HepG2 (cell line): ENCODE measurements at regions of chr20 and their contacts with region 1.

Region 1: DNA sequence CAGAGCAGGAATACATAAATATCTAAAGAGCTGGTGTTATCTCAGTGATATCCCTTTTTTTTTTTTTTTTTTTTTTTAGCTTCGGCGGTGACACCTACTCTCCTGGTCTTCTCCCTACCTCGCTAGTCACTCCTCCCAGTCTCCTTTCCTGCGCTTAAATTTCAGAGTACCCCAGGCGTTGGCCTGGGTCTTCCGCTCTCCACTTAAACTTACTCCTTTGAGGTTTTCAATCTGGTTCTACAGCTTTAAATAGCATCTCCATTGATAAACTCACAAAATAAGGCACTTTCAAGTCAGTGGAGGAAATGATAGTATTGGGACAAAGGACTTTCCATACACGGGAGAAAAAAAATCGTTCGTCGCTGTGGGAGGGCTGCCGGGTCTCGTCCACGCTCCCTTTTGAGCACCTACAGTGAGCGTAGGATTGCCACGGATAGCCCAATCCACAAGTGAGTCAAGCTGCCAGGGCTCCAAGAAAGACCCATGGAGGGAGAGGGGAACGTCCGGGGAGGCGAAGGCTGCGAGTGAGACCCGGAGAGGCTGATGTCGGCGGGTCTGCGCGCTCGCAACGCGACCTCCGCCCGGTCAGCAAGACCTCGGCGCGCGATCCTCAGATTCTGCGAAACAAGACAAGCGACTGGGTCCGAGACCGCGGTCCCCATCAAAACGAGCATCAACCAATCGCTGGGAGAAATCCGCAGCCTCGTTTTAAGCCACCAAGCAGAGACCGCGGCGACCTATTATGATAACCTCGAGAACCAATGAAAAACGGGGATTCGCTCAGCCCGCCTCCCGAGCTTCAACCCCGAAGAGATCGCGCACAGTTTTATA is 672 bp upstream of the SRSF6 start:
- DNase-seq: peak; percentile 97
- ATAC-seq: peak; percentile 90
- H3K4me3 ChIP-seq: peak overlapping the region; percentile 86 to 96 (median 90)
- H3K27ac ChIP-seq: peak overlapping the region; percentile 97
- H3K4me1 ChIP-seq: peaks cover 59% of the 10 kb centered on the region
- H3K27me3 ChIP-seq: peaks cover 0 to 2% of the 10 kb centered on the region in 2 experiments; a peak in 1 of 5 replicates
- CTCF ChIP-seq: 0 out of 2 replicates have a peak, but pooled peaks have one; percentile 14
- EP300 ChIP-seq: no peak
- POLR2A ChIP-seq: peak in 1 of 2 experiments; percentile 72; a peak in 2 of 4 replicates
- RAD21 ChIP-seq: no peak

Region 2: GRCh38 chr20:43507150-43508080 is 50.4 kb after region 1 on chr20 and contains the start of gene L3MBTL1:
- CTCF ChIA-PET with region 1: no interaction called
- POLR2A ChIA-PET with region 1: interaction called, 33 read pairs
- in situ Hi-C with region 1: no loop called
- intact Hi-C with region 1: loop called (anchors 5 kb)
- DNase-seq: peak; percentile 70
- ATAC-seq: peak; percentile 97
- H3K4me3 ChIP-seq: peak within 1 kb of the TSS; percentile 61 to 83 (median 73)
- H3K27ac ChIP-seq: no peak within 1 kb of the TSS
- H3K4me1 ChIP-seq: peaks cover 28% of the 10 kb centered on the region
- H3K27me3 ChIP-seq: peaks cover 2 to 24% of the 10 kb centered on the region in 2 experiments; a peak in 3 of 5 replicates
- CTCF ChIP-seq: peak; percentile 48; the same call in 1 of the 2 replicates
- EP300 ChIP-seq: no peak
- POLR2A ChIP-seq: peak in 1 of 2 experiments; percentile 86; a peak in 3 of 4 replicates
- RAD21 ChIP-seq: peak; percentile 69
- total RNA-seq, gene L3MBTL1: 2.4 and 9.0 TPM in 2 replicates

Region 3: DNA sequence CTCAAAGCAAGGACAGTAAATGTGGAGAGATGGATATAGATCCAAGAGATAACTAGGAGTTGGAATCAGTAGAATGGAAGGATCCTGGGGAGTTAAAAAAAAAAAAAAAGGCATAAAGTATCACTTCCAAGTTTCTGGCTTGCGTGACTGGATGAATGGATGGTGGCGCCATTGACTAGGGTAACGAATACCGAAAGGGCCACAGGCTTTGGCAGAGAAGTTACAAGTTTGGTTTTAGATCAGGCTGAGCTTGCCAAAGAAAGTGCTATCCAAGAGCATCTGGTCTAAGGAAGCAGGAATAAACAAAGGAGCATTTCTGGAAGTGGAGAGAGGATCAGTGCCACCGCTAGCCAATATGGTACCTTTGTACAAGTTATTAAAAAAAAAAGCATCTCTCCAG is 68.0 kb after region 1 on chr20:
- CTCF ChIA-PET with region 1: no interaction called
- POLR2A ChIA-PET with region 1: interaction called, 34 read pairs
- in situ Hi-C with region 1: no loop called
- intact Hi-C with region 1: no loop called
- DNase-seq: no peak
- ATAC-seq: no peak
- H3K4me3 ChIP-seq: no peak overlapping the region
- H3K27ac ChIP-seq: no peak overlapping the region
- H3K4me1 ChIP-seq: peaks cover 12% of the 10 kb centered on the region
- H3K27me3 ChIP-seq: no peaks in the 10 kb centered on the region
- CTCF ChIP-seq: no peak
- EP300 ChIP-seq: no peak
- POLR2A ChIP-seq: no peak
- RAD21 ChIP-seq: no peak

Region 4: DNA sequence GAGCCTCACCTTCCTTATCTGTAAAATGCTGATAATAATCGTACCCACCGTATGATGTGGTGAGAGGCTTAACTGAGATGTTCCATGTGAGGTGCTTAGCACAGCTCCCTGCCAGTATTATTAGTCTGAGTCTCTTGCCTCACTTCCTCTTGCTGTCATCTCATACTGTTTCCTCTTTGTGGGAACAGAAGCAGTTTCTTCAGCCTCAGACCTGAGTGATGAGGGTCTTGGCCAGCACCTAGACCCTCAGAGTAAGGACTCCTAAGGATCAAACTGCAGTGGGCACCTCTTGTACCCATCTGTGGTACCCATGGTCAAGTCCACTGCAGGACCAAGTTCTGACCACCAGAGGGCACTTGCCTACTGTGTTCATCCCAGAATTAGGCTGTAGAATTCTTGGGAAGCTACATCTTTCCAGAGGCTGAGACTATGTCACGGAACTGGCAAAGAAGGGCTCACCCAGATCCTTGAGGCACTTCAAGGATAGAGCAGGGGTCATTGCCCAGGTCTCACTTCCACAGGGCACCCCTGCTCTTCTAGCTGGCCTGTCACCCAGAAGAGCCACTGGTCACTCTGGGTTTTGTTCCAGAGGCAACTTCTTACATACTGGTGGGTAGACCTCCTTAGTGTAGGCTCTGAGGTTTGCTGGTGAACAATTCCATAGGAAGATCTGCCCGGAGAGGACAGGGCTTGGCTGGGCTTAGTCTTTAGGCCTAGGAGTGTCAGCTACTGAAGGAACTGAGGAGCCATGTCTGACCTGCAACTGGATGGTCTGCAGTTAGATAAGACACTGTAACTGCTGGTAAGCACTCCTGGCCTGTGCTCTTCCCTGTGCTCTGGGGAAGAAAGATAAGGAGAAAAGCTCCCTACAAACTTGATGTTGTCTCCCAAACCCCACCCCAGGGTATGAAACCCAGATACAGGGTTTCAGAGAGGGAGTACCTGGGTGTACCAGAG is 81.2 kb after region 1 on chr20:
- CTCF ChIA-PET with region 1: no interaction called
- POLR2A ChIA-PET with region 1: interaction called, 18 read pairs
- in situ Hi-C with region 1: no loop called
- intact Hi-C with region 1: no loop called
- DNase-seq: peak; percentile 74
- ATAC-seq: peak; percentile 67
- H3K4me3 ChIP-seq: no peak overlapping the region
- H3K27ac ChIP-seq: no peak overlapping the region
- H3K4me1 ChIP-seq: peaks cover 45% of the 10 kb centered on the region
- H3K27me3 ChIP-seq: no peaks in the 10 kb centered on the region; a peak in 1 of 5 replicates
- CTCF ChIP-seq: peak; percentile 99
- EP300 ChIP-seq: no peak
- POLR2A ChIP-seq: no peak
- RAD21 ChIP-seq: peak; percentile 97

Region 5: DNA sequence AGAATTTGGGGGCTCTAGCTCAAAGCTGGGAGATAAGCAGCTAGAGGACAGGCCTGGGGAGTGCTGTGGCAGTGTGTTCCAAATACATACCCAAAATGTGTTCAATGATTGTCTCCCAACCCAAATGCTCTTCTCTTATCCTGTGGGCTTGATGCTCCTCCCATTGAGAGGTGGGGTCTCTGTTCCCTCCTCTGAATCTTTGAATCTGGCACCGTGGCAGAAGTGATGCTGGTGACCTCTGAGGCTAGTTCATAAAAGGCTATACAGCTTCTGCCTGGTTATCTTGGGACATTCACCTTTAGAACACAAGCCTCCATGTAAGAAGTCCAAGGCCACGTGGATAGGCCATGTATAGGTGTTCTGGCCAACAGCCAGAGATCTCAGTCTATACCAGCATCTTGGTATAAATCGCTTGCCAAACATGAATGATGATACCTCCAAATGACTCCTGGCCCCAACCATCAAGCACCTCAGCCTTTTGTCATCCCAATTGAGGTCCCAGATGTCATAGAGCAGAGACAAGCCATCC is 194.0 kb after region 1 on chr20:
- CTCF ChIA-PET with region 1: no interaction called
- POLR2A ChIA-PET with region 1: interaction called, 18 read pairs
- in situ Hi-C with region 1: no loop called
- intact Hi-C with region 1: no loop called
- DNase-seq: no peak
- ATAC-seq: no peak
- H3K4me3 ChIP-seq: no peak overlapping the region
- H3K27ac ChIP-seq: no peak overlapping the region
- H3K4me1 ChIP-seq: peaks cover 44% of the 10 kb centered on the region
- H3K27me3 ChIP-seq: no peaks in the 10 kb centered on the region
- CTCF ChIP-seq: no peak
- EP300 ChIP-seq: no peak
- POLR2A ChIP-seq: no peak
- RAD21 ChIP-seq: no peak